ENCODE measurements at regions of chr6 and their contacts with region 1.

Region 1: DNA sequence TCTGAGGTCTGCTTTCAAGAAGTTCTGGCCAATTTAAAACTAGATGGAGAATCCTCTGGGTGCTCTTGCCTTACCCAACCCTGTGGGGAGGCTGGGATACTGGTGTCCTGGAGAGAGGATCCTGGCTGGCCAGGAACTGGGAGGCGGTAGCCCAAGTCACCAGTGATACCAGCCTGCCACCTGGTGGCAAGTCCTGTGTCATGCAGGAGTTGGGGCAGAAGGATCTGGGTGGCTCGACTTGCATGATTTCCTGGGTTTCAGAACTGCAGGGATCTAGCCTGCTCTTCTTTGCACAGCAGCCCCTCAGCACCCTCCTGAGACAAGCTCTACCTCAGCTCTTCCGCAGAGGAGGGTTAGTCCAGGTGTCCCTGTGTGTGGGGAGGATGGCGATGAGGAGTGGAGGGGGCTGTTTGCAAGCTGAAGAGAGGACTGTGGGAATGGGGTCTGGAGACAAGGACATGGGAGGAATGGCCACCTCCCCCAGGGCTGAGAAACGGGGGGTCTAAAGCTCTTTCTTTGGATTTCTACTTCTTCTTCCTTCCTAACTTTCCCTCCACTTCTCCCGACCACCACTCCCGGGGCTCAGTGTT is 4.2 kb downstream of the KCNK17 start:
- DNase-seq: peak; percentile 63 to 91 (median 84)
- ATAC-seq: peak; percentile 81 to 92 (median 84)
- H3K4me3 ChIP-seq: no peak overlapping the region
- H3K27ac ChIP-seq: no peak overlapping the region
- H3K4me1 ChIP-seq: peaks cover 0 to 3% (median 0%) of the 10 kb centered on the region in 3 donors
- H3K27me3 ChIP-seq: no peaks in the 10 kb centered on the region
- CTCF ChIP-seq: peak; percentile 79 to 89 (median 82)

Region 2: DNA sequence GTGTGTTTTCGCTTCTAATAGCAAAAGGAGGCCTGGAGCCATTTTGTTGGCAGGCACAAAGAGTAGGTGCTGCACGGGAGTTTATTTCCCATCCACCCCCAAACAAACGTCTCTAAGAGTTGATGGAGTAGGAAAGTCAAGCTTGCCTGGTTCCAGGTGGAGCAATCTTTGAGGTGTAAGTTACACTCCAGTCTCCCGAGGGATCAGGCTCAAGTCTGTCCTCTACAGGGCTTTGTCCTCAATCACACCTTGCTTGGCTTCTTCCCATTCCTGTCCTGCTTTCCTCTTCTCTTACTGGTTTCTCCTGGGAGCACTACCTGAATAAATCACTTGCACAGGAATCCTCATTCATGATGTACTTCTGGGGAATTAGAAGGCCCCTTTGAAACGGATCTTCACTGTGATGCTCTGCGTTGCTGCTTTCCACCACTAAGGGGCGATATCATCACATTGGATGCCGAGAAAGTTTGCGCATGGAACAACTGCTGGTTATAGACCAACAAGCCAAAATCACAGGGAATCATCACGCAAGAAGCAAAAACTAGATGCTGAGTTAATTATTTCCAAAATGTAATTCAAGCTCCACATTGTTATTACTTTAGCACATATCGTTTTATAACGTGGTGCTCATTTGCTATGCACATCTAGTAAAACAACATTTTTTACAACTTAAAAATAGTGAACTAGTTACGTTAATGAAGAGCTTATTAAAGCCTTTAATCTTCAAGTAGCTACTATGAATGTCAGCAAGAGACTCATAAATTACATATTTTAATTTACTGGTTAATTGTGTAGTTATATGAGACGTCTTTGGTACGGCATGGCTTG is 438.1 kb before region 1 on chr6:
- intact Hi-C with region 1: loop called in 2 of 3 experiments (anchors 5 to 10 kb)
- DNase-seq: peak in 5 of 6 donors; percentile 17 to 70 (median 38)
- ATAC-seq: peak; percentile 69 to 91 (median 84)
- H3K4me3 ChIP-seq: no peak overlapping the region
- H3K27ac ChIP-seq: no peak overlapping the region
- H3K4me1 ChIP-seq: no peaks in the 10 kb centered on the region
- H3K27me3 ChIP-seq: no peaks in the 10 kb centered on the region
- CTCF ChIP-seq: peak; percentile 71 to 89 (median 88)

Measured in pancreas (tissue), 10 donors.